ENCODE measurements at regions of chr2 and their contacts with region 1.

Region 1: GRCh38 chr2:7007846-7008741 is 90.9 kb downstream of the RNF144A start:
- DNase-seq: peak; percentile 91 to 97 (median 95)
- ATAC-seq: peak; percentile 80 to 88 (median 86)
- H3K4me3 ChIP-seq: peak overlapping the region in 9 of 12 donors; percentile 8 to 37 (median 23)
- H3K27ac ChIP-seq: peak overlapping the region; percentile 59 to 89 (median 81)
- H3K4me1 ChIP-seq: peaks cover 22 to 79% (median 62%) of the 10 kb centered on the region in 12 donors
- H3K27me3 ChIP-seq: no peaks in the 10 kb centered on the region
- CTCF ChIP-seq: peak in 11 of 12 donors; percentile 26 to 60 (median 44)
- POLR2A ChIP-seq: no peak

Region 2: GRCh38 chr2:6922201-6922685 is 85.9 kb before region 1 on chr2:
- intact Hi-C with region 1: loop called in 6 of 10 experiments (anchors 1 to 5 kb)
- DNase-seq: no peak
- ATAC-seq: no peak
- H3K4me3 ChIP-seq: no peak overlapping the region
- H3K27ac ChIP-seq: peak overlapping the region in 3 of 12 donors; percentile 37 to 60 (median 57)
- H3K4me1 ChIP-seq: peaks cover 16 to 92% (median 51%) of the 10 kb centered on the region in 12 donors
- H3K27me3 ChIP-seq: no peaks in the 10 kb centered on the region
- CTCF ChIP-seq: peak in 2 of 12 donors; percentile 9 to 11
- POLR2A ChIP-seq: no peak

Region 3: DNA sequence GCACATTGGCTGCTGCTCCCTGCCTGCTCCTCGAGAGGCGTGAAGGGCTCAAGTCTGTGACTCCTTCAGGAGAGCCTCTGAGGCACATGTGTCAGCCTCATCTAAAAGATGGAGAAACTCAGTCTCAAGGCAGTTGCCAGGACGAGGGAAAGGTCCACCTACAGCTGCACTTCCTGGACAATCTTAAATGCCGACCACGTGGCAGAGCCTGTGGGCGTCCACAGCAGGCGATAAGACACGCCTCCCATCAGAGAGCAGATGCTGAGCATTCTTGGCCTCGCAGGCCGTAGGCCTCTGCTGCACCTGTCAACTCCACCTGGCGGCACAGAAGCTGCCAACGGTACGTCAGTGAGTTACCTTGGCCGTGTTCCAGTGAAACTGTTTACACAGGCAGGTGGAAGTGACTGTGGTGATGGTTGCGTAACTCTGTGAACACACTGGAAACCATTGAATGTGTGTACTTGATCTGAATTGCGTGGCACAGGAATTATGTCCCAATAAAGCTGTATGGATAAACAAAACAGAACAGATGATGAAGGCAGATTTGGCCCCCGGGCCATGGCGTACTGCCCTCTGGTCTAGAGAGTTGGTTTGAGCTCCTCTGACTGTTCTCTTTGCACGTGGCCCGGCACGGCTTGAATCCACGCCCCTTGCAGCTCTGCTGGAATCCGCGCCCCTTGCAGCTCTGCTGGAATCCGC is 23.6 kb after region 1 on chr2:
- intact Hi-C with region 1: loop called in 3 of 10 experiments (anchors 2 kb)
- DNase-seq: peak in 1 of 5 donors; percentile 54
- ATAC-seq: peak in 2 of 4 donors; percentile 18 to 55
- H3K4me3 ChIP-seq: no peak overlapping the region
- H3K27ac ChIP-seq: no peak overlapping the region
- H3K4me1 ChIP-seq: peaks cover 0 to 42% (median 24%) of the 10 kb centered on the region in 12 donors
- H3K27me3 ChIP-seq: no peaks in the 10 kb centered on the region
- CTCF ChIP-seq: no peak
- POLR2A ChIP-seq: no peak

Region 4: DNA sequence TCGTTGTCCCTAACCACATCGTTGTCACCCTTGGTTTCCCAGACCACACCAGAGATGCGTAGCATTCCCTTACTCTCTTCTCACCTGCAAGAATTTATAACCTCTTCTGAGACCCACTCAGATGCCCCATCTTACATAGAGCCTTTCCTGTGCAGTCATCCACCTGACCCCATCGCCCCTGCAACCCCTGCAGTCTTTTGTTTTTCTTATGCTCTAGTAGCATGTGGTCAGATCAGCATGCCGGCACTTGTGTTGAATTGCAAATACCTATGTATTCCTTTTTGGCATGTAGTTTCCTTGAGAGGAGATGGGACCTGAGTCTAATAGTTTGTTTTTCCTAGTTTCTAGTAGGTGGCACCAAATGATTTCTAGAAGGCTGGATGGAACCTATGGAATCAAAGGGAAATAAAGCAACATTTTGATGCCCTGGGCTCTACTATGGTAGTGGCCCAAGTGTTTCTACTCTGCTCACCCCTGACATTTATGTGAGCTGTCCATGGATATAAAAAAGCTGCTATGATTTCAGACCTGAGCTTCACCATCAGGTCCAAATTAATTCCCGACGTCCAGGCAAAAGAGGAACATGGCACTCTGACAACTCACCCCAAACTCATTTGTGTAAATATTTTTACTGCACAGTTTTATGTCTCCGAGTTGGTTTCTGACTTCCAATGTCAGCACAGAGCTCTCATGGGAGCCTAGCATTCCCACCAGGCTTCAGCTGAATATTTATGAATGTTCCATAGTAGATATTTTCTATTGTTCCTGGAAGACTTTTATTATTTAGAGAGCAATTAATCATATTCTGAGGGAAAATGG is 52.7 kb after region 1 on chr2:
- intact Hi-C with region 1: no loop called
- DNase-seq: no peak
- ATAC-seq: no peak
- H3K4me3 ChIP-seq: no peak overlapping the region
- H3K27ac ChIP-seq: peak overlapping the region in 1 of 12 donors; percentile 5
- H3K4me1 ChIP-seq: peaks cover 0 to 27% (median 0%) of the 10 kb centered on the region in 12 donors
- H3K27me3 ChIP-seq: no peaks in the 10 kb centered on the region
- CTCF ChIP-seq: no peak
- POLR2A ChIP-seq: no peak

Region 5: GRCh38 chr2:7133521-7133920 is 125.4 kb after region 1 on chr2:
- intact Hi-C with region 1: no loop called
- DNase-seq: no peak
- ATAC-seq: no peak
- H3K4me3 ChIP-seq: no peak overlapping the region
- H3K27ac ChIP-seq: no peak overlapping the region
- H3K4me1 ChIP-seq: no peaks in the 10 kb centered on the region
- H3K27me3 ChIP-seq: no peaks in the 10 kb centered on the region
- CTCF ChIP-seq: no peak
- POLR2A ChIP-seq: no peak